Heart left ventricle (tissue), 16 donors: ENCODE measurements at regions of chr7 and their contacts with region 1.

Region 1: DNA sequence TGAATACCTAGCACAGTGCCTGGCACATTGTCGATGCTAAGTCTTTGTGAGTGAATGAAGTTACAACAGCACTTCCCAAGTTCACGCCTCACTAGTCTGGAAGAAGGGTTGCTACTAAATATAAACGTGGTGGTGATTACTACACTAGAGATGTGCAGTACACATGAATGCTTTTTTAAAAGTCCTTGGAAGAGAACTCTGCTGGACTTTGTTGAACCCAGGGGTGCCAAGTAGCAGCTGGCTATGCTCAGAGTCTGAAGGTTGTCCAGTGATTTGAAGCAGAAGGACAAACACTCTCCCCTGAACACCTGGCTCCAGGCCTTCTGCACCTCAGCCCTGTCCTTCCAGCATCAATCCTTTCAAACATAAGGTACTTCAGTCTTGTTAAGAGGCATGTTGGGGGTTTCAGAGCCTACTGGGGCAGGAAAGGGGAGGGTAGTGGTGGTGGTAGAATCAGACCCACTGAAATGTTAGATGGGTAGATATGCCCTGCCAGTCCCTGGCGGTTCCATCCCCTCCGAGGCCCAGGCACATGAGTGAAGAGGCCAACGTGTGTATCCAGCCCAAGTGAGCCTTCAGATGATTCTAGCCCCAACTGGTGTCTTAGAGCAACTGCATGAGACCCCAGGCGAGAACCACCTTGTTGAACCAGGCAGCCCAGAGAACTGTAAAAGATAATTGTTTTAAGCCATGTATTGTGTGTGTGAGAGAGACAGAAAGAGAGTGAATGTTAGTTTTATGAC is 94.4 kb downstream of the TAX1BP1 start:
- DNase-seq: peak in 4 of 5 donors; percentile 28 to 62 (median 44)
- ATAC-seq: peak; percentile 83 to 91 (median 90)
- H3K4me3 ChIP-seq: no peak overlapping the region
- H3K27ac ChIP-seq: peak overlapping the region; percentile 9 to 78 (median 70)
- H3K4me1 ChIP-seq: peaks cover 0 to 26% (median 6%) of the 10 kb centered on the region in 12 donors
- H3K27me3 ChIP-seq: no peaks in the 10 kb centered on the region
- CTCF ChIP-seq: no peak
- POLR2A ChIP-seq: no peak

Region 2: GRCh38 chr7:27661811-27662489 is 172.4 kb before region 1 on chr7:
- intact Hi-C with region 1: no loop called
- DNase-seq: peak; percentile 29 to 60 (median 33)
- ATAC-seq: peak in 3 of 4 donors; percentile 1 to 14 (median 4)
- H3K4me3 ChIP-seq: peak overlapping the region; percentile 57 to 97 (median 80)
- H3K27ac ChIP-seq: peak overlapping the region; percentile 85 to 98 (median 91)
- H3K4me1 ChIP-seq: peaks cover 0 to 23% (median 6%) of the 10 kb centered on the region in 12 donors
- H3K27me3 ChIP-seq: no peaks in the 10 kb centered on the region
- CTCF ChIP-seq: no peak
- POLR2A ChIP-seq: no peak

Region 3: DNA sequence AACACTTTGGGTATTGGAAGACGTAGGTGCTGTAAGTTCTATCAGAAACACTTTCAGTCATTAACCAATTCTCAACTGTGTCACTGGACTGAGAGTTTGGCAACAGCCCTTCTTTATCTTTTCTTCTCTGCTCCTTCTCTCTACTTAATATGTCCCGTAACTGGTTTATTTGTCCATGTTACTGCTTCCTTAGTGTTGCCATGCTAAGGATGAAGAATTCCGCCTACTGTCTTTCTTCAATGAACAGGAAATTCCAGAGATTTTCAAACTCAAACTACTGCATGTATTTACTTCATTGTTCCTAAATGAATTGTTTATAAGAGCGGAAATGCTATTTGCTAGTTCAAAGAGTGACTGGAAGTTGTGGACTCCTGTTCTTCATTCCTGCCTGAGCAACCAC is 49.3 kb after region 1 on chr7:
- intact Hi-C with region 1: no loop called
- DNase-seq: no peak
- ATAC-seq: no peak
- H3K4me3 ChIP-seq: no peak overlapping the region
- H3K27ac ChIP-seq: peak overlapping the region in 4 of 12 donors; percentile 7 to 22 (median 18)
- H3K4me1 ChIP-seq: peaks cover 0 to 36% (median 10%) of the 10 kb centered on the region in 12 donors
- H3K27me3 ChIP-seq: no peaks in the 10 kb centered on the region
- CTCF ChIP-seq: no peak
- POLR2A ChIP-seq: no peak

Region 4: GRCh38 chr7:28002638-28003037 is 168.3 kb after region 1 on chr7:
- intact Hi-C with region 1: loop called in 1 of 10 experiments (anchors 5 kb)
- DNase-seq: no peak
- ATAC-seq: no peak
- H3K4me3 ChIP-seq: no peak overlapping the region
- H3K27ac ChIP-seq: no peak overlapping the region
- H3K4me1 ChIP-seq: peaks cover 0 to 22% (median 12%) of the 10 kb centered on the region in 12 donors
- H3K27me3 ChIP-seq: no peaks in the 10 kb centered on the region
- CTCF ChIP-seq: no peak
- POLR2A ChIP-seq: no peak

Region 5: DNA sequence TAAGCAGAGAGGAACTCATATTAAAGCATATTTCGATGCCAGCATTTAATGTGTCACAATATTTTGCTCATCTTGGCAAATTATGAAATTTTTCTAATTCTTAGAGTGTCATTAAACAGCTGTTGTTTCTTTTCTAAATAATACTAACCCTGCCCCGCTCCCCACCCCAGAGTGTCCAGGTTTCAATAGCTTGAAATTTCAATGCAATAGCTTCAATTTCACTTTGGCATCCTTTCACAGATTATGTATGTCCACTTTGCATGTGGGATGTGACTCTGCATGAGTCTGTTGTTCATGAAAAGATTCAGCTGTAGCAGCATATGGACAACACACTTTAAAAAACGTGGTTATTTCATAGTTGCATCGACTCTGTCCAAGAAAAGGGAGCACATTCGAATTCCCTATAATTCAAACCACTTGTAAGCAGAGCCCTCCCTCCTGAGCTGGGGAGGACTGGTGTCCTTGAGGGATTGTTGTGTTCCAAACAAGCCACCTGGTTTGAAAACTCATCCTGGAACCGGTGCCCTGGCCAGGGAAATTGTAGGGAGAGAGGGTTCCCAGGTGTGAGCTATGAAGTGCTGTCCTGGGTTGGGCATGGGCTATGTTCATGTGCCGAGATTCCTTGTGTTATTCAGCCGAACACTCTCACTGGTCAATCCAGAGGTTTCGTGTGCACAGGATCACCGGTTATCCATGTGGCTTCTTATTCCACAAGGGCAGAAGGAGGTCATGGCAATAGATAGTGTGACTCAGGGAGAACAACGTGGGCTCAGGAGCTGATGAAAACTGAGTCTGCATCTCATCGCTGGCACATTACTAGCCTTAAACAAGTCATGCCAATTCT is 513.3 kb after region 1 on chr7:
- intact Hi-C with region 1: no loop called
- DNase-seq: peak in 3 of 5 donors; percentile 18 to 39 (median 36)
- ATAC-seq: peak; percentile 73 to 92 (median 88)
- H3K4me3 ChIP-seq: no peak overlapping the region
- H3K27ac ChIP-seq: peak overlapping the region in 11 of 12 donors; percentile 14 to 81 (median 65)
- H3K4me1 ChIP-seq: peaks cover 0 to 28% (median 4%) of the 10 kb centered on the region in 12 donors
- H3K27me3 ChIP-seq: no peaks in the 10 kb centered on the region
- CTCF ChIP-seq: no peak
- POLR2A ChIP-seq: no peak